Heart left ventricle (tissue), 16 donors: ENCODE measurements at regions of chr10 and their contacts with region 1.

Region 1: GRCh38 chr10:106525835-106526234 is 638.7 kb downstream of the SORCS1 start:
- DNase-seq: no peak
- ATAC-seq: no peak
- H3K4me3 ChIP-seq: no peak overlapping the region
- H3K27ac ChIP-seq: no peak overlapping the region
- H3K4me1 ChIP-seq: no peaks in the 10 kb centered on the region
- H3K27me3 ChIP-seq: no peaks in the 10 kb centered on the region
- CTCF ChIP-seq: no peak
- POLR2A ChIP-seq: no peak

Region 2: DNA sequence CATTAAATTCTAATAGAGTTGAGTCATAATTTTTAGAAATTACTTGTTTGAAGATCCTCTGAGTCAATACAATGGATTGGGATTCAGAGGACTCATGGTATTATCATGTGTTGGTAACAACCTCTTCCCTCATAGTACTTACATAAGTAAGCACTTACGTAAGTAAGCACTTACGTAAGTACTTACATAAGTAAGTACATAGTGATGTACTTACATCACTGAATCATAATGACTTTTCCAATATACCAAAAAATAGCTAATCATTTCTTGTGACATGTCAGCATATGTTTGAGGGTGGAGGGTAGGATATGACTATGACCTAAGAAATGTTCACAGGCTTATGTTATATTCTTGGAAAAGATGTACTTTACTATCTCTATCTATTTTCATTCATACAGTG is 101.8 kb before region 1 on chr10:
- intact Hi-C with region 1: loop called in 1 of 10 experiments (anchors 5 kb)
- DNase-seq: no peak
- ATAC-seq: no peak
- H3K4me3 ChIP-seq: no peak overlapping the region
- H3K27ac ChIP-seq: no peak overlapping the region
- H3K4me1 ChIP-seq: no peaks in the 10 kb centered on the region
- H3K27me3 ChIP-seq: no peaks in the 10 kb centered on the region
- CTCF ChIP-seq: no peak
- POLR2A ChIP-seq: no peak

Region 3: GRCh38 chr10:106780632-106781031 is 254.8 kb after region 1 on chr10:
- intact Hi-C with region 1: no loop called
- DNase-seq: no peak
- ATAC-seq: no peak
- H3K4me3 ChIP-seq: no peak overlapping the region
- H3K27ac ChIP-seq: no peak overlapping the region
- H3K4me1 ChIP-seq: no peaks in the 10 kb centered on the region
- H3K27me3 ChIP-seq: peaks cover 0 to 7% (median 0%) of the 10 kb centered on the region in 9 donors
- CTCF ChIP-seq: no peak
- POLR2A ChIP-seq: no peak